ENCODE measurements at regions of chr1 and their contacts with region 1.

Region 1: DNA sequence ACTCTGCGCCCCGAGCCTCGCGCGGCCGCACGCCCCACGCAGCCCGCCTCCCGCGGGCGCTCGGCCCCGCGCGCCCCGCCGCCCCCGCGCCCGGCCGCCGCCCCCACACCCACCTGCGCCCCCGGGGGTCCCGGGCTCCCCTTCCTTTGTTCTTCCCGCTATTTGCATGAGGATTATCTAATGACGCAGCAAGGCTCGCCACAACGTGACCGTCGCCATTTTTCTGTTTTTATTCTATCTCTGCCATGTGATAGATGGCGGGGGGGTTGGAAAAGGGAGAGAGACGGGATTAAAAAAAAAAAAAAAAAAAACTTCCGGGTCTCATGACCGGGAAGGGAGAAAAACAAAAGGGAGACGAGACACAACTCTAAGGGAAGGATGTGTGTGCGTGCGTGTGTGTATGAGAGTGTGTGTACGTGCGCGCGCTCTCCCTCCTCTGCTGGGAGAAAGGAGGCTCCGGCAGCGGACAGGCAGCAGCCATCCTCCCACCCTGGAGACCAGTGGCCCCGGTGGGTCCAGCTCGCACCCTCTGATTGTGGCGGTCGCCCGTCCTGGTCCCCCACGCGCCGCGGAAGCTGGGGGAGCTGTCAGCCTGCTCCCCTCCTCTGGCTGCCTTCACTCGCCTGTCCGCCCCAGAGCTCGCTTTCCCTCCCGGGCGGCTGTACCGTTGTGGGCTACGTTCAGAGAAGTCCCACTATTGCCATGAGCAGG is 80.4 kb upstream of the AK4 start:
- DNase-seq: peak; percentile 66
- H3K4me3 Mint-ChIP-seq: peak overlapping the region; percentile 87
- H3K27ac Mint-ChIP-seq: peak overlapping the region; percentile 93
- H3K4me1 Mint-ChIP-seq: peaks cover 53% of the 10 kb centered on the region
- H3K27me3 Mint-ChIP-seq: no peaks in the 10 kb centered on the region

Region 2: GRCh38 chr1:64744492-64745180 is 323.0 kb before region 1 on chr1 and contains the start of gene RAVER2:
- CTCF ChIA-PET with region 1: no interaction called
- POLR2A ChIA-PET with region 1: no interaction called
- intact Hi-C with region 1: loop called (anchors 5 kb)
- DNase-seq: peak; percentile 72
- H3K4me3 Mint-ChIP-seq: peak within 1 kb of the TSS; percentile 77
- H3K27ac Mint-ChIP-seq: no peak within 1 kb of the TSS
- H3K4me1 Mint-ChIP-seq: peaks cover 5% of the 10 kb centered on the region
- H3K27me3 Mint-ChIP-seq: peaks cover 3% of the 10 kb centered on the region
- total RNA-seq, gene RAVER2: 2.9 to 3.2 TPM

Region 3: DNA sequence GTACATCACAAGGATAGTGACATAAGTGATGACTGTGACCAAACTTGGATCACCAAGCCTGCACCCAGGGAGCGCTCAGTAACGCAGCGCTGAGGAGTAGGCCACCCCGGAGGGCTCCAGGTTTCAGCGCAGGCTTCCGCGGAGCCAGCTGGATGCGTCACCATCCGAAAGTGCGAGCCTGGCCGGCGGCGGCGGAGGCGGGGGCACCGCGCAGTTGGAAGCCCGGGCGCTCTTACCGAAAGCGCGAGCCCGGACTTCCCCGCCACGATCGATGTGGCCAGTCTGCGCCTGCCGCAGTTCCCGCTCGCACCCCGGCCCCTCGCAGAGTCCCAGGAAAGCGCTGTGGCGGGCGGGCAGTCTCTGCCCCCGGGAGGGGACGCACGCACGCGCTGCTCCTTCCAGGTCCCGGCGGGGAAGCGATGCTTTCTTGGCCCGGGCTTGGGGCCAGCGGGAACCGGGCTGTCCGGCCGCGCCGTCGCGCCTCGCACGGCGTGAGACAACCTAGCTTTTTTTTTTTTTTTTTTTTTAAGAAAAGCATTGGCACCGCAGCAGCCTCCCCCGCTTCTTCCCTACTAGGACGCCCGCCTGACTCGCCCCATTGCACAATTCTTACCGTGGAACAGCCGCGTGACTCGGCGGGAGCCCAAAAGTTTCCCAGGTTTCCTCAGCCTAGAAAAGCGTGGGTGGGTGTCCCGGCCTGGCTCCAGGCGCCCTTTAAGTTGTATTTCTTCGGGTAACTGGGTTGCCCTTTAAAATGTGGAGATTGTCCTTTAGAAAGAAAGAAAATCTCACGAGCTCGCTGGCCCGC is 64.9 kb before region 1 on chr1:
- CTCF ChIA-PET with region 1: no interaction called
- POLR2A ChIA-PET with region 1: interaction called, 3 read pairs
- intact Hi-C with region 1: loop called (anchors 1 kb)
- DNase-seq: peak; percentile 82
- H3K4me3 Mint-ChIP-seq: peak overlapping the region; percentile 76
- H3K27ac Mint-ChIP-seq: peak overlapping the region; percentile 84
- H3K4me1 Mint-ChIP-seq: peaks cover 23% of the 10 kb centered on the region
- H3K27me3 Mint-ChIP-seq: no peaks in the 10 kb centered on the region

Region 4: DNA sequence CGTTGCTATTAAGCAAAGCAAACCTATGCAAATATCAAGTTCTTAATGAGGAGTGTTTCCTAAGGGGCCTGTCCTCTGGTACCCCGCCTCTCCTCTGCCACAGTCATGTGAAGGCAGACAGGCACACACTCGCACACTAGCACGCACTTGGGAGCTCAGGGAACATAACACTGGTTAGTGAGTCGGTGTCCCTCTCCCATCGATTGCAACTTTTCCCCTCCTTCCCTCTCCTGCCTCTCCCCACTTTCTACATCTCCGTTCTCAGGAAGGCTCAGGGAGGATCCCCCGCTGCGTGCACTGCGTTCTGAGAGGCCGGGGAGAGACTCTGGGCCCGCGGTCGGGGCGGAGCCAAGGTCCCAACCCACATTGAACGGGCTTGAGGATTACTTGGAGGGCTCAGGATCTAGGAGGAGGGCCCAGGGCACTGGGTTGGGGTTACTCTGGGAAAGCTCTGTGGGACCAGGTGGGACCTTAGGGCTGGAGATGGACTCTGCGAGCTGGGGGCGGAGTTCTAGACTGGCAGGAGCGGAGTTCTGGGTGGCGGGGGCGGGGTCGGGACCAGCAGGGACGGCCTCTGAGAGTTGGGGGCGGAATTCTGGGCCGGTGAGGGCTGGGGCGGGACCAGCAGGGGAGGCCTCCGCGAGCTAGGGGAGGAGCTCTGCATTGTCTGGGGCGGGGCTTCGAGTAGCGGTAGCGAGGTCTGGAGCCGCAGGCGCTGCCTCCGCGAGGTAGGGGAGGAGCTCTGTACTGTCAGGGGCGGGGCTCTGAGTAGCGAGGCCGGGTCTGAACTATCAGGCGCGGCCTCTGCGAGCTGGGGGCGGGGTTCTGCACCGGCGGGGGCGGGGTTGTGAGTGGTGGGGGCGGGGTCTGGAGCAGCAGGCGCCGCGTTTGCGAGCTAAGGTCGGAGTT is 352.3 kb after region 1 on chr1:
- CTCF ChIA-PET with region 1: no interaction called
- POLR2A ChIA-PET with region 1: no interaction called
- intact Hi-C with region 1: loop called (anchors 2 kb)
- DNase-seq: peak; percentile 99
- H3K4me3 Mint-ChIP-seq: peak overlapping the region; percentile 90
- H3K27ac Mint-ChIP-seq: peak overlapping the region; percentile 88
- H3K4me1 Mint-ChIP-seq: peaks cover 21% of the 10 kb centered on the region
- H3K27me3 Mint-ChIP-seq: no peaks in the 10 kb centered on the region

Region 5: GRCh38 chr1:66331657-66332547 is 1264.3 kb after region 1 on chr1:
- CTCF ChIA-PET with region 1: no interaction called
- POLR2A ChIA-PET with region 1: no interaction called
- intact Hi-C with region 1: loop called (anchors 5 kb)
- DNase-seq: peak; percentile 75
- H3K4me3 Mint-ChIP-seq: peak overlapping the region; percentile 93
- H3K27ac Mint-ChIP-seq: peak overlapping the region; percentile 96
- H3K4me1 Mint-ChIP-seq: peaks cover 48% of the 10 kb centered on the region
- H3K27me3 Mint-ChIP-seq: no peaks in the 10 kb centered on the region